ENCODE measurements at regions of chr1 and their contacts with region 1.

Region 1: DNA sequence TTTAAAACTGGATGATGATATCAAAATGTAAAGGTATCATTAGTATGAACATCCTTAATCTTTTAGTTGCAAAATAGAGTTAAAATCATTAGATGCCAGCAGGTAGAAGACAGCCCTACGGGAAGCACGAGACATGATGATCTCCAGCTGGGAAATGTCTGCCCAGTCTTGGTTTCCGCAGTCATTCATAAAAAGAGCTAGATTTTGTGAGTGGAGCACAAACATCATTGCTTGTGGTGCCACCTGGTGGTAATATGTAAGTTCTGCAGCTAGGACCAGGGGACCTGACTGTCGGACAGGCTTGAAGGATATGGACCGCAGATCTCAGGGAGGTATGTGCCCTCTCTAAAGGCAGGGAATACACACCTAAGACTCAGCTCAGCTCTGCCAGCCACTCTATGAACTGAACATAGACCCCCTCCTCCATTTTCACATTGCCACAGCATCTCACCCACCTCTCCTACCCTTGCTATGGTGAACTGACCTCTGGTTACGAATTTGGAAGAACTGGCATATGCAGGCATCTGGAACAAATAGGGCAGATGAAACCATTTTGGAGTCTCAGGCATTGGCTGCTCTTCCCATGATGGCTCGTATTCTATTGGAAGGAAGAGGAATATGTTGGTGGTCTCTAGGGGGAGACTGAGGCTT is 9.2 kb downstream of the FCMR start:
- DNase-seq: peak; percentile 78
- ATAC-seq: peak; percentile 81

Region 2: GRCh38 chr1:206612129-206612876 is 300.3 kb before region 1 on chr1 and contains the start of gene EIF2D:
- intact Hi-C with region 1: loop called (anchors 5 kb)
- DNase-seq: peak; percentile 97
- ATAC-seq: peak; percentile 99
- total RNA-seq, gene EIF2D: 54.1 TPM

Region 3: GRCh38 chr1:206734499-206735142 is 177.9 kb before region 1 on chr1:
- intact Hi-C with region 1: loop called (anchors 10 kb)
- DNase-seq: peak; percentile 78
- ATAC-seq: peak; percentile 44

Region 4: DNA sequence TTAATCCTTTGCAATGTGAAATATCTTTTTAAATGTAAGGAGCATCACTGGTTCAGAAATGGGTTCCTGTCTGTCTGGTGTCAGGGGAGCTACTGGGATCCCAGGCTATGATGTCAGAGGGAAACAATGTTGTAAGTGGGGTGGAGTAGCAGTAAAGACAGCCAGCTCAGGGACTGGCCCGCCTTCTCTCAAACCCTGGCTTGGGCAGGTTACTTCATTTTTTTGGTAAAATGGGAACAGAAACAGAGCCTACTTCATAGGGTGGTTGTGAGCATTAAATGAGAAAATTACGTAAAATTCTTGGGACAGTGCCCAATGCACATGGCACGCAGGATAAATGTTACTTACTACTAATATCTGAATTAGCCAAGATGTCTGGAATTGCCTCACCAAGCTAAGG is 77.9 kb before region 1 on chr1:
- intact Hi-C with region 1: no loop called
- DNase-seq: no peak
- ATAC-seq: peak; percentile 45

Region 5: GRCh38 chr1:206846487-206846886 is 66.1 kb before region 1 on chr1:
- intact Hi-C with region 1: no loop called
- DNase-seq: no peak
- ATAC-seq: no peak

Region 6: DNA sequence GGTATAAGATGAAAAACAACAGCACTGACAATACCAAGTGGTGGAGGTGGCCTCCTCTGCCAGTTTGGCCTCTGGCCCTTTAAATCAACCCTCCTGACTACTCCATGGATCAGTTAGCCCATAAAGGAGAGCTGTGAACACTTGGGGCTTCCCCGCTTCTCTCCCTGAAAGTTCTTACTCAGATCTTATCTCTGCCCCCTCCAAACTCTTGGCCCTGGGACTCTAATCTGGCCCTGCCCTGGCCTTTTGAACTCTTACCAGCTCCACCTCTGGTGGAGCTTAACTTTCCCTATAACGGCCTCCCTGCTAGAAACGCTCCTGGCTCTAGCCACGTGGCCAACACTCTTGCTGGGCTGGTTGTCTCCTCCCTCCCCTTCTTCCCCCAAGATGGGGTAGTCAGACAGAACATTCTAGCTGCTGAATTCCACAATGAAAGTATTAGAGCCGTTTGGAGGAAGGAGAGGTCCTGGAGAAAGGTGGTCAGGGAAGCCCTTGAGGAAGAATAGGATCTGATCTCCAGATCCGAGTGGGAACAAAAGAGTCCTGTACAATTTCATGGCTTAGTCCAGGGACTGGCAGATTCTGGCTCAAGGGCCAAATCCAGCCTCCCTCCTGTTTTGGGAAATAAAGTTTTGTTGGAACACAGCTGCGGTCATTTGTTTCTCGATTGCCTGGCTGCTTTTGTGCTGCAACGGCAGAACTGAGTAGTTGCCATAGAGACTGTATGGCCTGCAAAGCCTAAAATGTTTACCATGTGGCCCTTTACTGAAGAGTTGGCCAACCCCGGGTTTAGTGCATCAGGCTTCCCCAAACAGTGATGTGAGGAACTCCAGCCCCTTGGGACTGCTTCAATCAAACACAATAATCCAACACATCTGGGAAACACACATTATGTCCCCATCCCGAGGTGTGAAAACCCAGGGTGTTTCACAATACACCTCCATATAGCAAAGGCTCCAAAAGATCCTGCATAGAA is 43.2 kb after region 1 on chr1:
- intact Hi-C with region 1: no loop called
- DNase-seq: no peak
- ATAC-seq: peak; percentile 27

Region 7: DNA sequence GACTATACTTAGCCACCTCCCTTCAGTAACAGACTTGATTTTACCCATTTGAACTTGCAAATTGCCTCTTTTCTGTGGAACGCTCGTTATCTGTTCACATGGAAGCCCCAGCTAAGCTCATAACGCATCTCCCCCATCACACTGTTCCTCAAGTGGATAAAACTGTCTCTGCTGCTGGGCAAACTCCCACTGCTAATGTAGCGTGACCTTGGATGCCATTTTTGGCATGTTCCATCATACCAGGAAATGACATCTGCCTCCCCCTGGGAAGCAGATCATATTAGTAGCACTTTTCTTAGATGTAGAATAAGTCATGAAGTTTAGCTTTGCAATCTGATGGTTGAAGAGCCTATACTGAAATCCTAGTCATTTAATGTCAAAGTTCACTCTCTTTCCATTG is 1860.3 kb after region 1 on chr1:
- intact Hi-C with region 1: no loop called
- DNase-seq: no peak
- ATAC-seq: no peak